HCT116 (cell line): ENCODE measurements at regions of chr6 and their contacts with region 1.

Region 1: DNA sequence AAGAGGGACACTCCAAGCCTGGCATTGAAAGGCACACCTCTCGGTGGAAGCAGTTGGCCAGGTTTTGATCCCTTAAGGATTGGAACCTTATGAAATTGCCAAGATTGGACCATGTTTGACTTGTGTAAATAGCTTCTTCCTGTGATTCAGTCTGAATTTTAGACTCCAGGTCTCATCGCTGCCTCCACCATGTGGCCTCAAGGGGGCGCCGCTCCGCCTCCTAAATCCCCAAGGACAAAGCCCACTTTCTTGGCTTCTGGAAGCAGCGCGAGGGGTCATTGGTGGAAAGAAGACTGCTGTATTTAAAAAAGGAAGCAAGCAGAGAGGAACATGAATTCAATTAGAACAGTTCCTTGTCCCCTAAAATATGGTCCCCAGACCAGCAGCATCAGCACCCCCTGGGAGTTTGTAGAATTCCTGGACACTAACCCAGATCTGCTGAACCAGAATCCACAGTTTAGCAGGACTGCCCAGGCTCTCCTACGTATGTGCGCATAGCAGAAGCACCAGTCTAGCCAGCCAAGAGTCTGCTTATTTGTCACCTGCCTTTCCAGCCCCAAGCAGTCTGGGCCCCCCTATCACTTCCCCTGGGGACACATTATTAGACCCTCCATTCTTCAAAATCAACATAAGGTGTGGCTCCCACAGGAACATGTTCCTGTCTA is 108.5 kb downstream of the LY86 start:
- DNase-seq: peak; percentile 63
- ATAC-seq: peak; percentile 63
- H3K4me3 ChIP-seq: no peak overlapping the region
- H3K27ac ChIP-seq: no peak overlapping the region
- H3K4me1 ChIP-seq: peaks cover 23 to 42% of the 10 kb centered on the region in 2 experiments
- H3K27me3 ChIP-seq: no peaks in the 10 kb centered on the region
- CTCF ChIP-seq: peak; percentile 66 to 98 (median 98); a peak in 5 of 6 replicates
- POLR2A ChIP-seq: no peak
- RAD21 ChIP-seq: peak; percentile 86

Region 2: GRCh38 chr6:6466967-6467761 is 229.8 kb before region 1 on chr6:
- CTCF ChIA-PET with region 1: no interaction called
- POLR2A ChIA-PET with region 1: no interaction called
- RAD21 ChIA-PET with region 1: no interaction called
- intact Hi-C with region 1: no loop called
- DNase-seq: no peak
- ATAC-seq: no peak
- H3K4me3 ChIP-seq: no peak overlapping the region
- H3K27ac ChIP-seq: no peak overlapping the region
- H3K4me1 ChIP-seq: no peaks in the 10 kb centered on the region
- H3K27me3 ChIP-seq: peaks cover 20% of the 10 kb centered on the region
- CTCF ChIP-seq: no peak
- POLR2A ChIP-seq: no peak
- RAD21 ChIP-seq: no peak

Region 3: DNA sequence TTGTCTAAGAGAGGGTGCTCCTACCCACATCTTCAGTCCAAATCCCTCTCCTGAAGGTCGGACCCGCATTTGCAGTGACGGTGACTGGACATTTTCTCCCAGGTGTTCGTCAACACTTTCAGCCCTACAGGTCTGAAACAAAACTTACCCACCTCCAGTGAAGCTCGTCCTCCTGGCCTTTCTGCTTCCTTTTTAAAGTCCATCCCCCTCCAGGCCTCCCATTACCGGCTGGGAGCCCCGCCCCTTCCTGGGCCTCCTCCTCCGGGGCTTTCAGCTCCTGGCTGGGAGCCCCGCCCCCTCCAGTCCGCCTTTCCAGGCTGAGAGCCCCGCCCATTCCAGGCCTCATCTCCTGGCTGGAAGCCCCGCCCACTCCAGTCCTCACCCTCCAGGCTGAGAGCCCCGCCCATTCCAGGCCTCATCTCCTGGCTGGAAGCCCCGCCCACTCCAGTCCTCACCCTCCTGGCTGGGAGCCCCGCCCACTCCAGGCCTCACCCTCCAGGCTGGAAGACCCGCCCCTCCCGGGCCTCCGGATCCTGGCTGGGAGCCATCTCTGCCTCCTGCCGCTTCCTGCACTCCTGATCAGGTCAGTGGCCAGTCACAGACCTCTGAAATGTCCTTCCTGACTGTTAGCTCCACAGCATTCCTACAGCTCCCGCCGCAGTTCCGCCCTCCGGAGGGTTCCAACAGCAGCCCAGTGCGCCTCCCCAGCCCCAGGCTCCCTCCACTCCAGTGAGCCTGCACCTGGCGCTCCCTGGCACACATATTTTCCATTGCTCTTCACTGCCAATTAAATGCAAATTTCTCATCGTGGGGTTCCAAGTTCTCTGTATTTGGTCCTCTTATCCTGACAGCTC is 10.0 kb before region 1 on chr6:
- CTCF ChIA-PET with region 1: interaction called, 31 read pairs
- POLR2A ChIA-PET with region 1: interaction called, 8 read pairs
- RAD21 ChIA-PET with region 1: interaction called in 1 of 2 experiments, 4 read pairs
- intact Hi-C with region 1: no loop called
- DNase-seq: peak; percentile 93
- ATAC-seq: peak; percentile 94
- H3K4me3 ChIP-seq: peak overlapping the region; percentile 67 to 69
- H3K27ac ChIP-seq: peak overlapping the region; percentile 68
- H3K4me1 ChIP-seq: peaks cover 0 to 19% of the 10 kb centered on the region in 2 experiments; a peak in 3 of 4 replicates
- H3K27me3 ChIP-seq: no peaks in the 10 kb centered on the region
- CTCF ChIP-seq: no peak
- POLR2A ChIP-seq: peak; percentile 36
- RAD21 ChIP-seq: no peak

Region 4: GRCh38 chr6:6707143-6707542 is 10.1 kb after region 1 on chr6:
- CTCF ChIA-PET with region 1: interaction called, 18 read pairs
- POLR2A ChIA-PET with region 1: no interaction called
- RAD21 ChIA-PET with region 1: no interaction called
- intact Hi-C with region 1: no loop called
- DNase-seq: no peak
- ATAC-seq: no peak
- H3K4me3 ChIP-seq: no peak overlapping the region
- H3K27ac ChIP-seq: no peak overlapping the region
- H3K4me1 ChIP-seq: peaks cover 0 to 7% of the 10 kb centered on the region in 2 experiments; a peak in 2 of 4 replicates
- H3K27me3 ChIP-seq: no peaks in the 10 kb centered on the region
- CTCF ChIP-seq: no peak
- POLR2A ChIP-seq: no peak
- RAD21 ChIP-seq: no peak